GM13976 (cell line): ENCODE measurements at regions of chr18 and their contacts with region 1.

Region 1: DNA sequence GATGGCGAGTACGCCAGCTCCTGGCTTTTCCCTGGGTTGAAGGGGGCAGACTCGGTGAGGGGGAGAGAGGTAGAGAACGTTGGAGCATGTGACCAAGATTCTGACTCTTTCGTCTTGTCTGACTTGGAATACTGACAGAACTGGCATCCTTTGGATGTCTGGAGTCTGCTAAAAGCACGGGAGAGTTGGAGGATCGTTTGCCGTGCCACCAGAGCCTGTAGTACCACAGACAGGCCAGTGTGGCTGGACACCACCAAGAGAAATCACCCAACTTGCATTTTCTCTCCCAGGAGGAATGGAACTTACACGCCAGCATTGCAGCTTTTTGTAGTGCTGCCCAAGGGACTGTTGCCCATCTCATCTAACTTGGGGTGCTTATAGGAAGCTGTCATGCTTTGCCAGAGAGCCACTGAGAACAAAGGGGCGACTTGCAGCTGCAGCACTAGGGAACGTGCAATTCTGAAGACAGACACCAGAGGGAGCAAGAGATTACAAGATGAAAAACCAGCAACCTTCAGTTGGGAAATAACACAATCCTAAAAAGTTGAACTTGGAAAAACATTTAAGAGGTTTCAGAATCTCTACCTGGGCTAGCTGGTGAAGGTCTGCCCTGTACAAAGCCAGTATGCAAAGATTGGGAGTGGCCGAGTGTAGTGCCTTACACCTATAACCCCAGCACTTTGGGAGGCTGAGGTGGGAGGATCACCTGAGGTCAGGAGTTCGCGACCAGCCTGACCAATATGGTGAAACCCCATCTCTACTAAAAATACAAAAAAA is 24.1 kb downstream of the PSMG2 start:
- DNase-seq: peak; percentile 69
- CTCF ChIP-seq: peak; percentile 83

Region 2: DNA sequence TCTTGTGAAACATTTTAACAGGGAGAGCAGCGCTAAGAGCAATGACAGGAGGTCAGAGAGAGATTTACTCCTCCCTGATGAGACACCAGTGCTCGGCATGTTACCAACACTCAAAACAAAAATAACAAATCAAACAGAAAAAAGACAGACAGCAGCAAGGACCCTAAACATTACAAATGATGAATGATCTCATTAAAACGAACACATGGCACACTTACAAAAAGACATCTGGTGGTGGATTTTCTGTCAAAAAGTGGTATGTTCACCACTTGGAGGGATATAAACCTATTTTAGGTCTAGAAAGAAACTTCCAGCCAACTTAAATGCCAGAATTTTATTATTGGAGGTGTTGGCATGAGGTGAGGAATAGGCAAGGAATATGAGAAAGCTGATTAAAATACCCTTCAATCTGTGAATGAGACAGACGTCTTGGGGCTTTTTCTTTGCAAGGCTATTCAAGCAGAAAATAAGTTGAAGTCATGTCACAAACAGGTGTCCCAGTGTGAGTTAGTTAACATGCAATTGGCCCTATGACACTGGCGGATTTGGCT is 206.4 kb before region 1 on chr18:
- in situ Hi-C with region 1: no loop called
- DNase-seq: peak; percentile 15
- CTCF ChIP-seq: no peak

Region 3: DNA sequence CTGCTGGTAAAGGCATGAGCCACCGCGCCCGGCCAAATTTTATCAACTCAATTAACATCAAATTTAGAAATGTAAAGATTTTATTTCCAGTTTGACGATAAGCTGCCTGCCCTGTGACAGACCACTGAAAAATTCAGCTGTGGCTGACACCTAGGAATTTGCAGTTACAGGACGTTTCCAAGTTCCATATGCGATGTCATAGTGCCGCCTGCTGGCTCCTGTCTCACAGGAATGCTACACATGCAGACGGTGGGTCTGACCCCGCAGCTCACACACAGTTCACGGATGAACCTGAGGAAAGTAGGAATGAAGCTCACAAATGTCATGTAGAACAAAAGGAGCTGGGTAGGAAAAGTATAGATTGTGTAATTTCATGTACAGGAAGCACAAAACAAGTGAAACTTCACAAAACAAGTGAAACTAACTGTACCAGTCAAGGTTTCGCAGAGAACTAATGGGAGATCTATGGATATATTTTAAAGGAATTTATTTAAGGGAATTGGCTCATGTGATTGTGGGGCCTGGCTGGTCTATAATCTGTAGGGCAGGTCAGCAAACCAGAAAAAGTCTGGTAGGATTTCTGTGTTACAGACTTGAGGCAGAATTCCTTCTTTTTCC is 207.6 kb after region 1 on chr18:
- in situ Hi-C with region 1: loop called (anchors 5 kb)
- DNase-seq: peak; percentile 75
- CTCF ChIP-seq: peak; percentile 88